GM10248 (cell line): ENCODE measurements at regions of chr15 and their contacts with region 1.

Region 1: GRCh38 chr15:82072926-82073537 is 27.2 kb upstream of the MEX3B start:
- DNase-seq: no peak
- CTCF ChIP-seq: no peak

Region 2: DNA sequence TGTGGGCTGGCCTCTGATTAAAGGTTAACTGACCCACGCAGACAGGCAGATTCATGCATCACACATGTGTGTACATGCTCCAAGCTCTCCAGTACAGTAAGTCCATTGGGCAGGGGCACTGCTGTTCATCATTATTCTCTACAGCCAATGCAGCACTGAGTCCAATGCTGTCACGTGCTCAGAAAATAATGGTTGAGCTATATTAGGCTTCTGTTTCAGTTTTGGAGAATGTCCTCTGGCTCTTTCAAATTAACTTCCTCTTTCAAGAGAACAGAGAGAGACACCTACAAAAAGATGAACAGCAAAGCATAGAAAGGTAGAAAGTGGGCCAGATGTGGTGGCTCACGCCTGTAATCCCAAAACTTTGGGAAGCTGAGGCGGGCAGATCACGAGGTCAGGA is 229.8 kb before region 1 on chr15:
- CTCF ChIA-PET with region 1: no interaction called
- POLR2A ChIA-PET with region 1: no interaction called
- DNase-seq: no peak
- CTCF ChIP-seq: no peak

Region 3: DNA sequence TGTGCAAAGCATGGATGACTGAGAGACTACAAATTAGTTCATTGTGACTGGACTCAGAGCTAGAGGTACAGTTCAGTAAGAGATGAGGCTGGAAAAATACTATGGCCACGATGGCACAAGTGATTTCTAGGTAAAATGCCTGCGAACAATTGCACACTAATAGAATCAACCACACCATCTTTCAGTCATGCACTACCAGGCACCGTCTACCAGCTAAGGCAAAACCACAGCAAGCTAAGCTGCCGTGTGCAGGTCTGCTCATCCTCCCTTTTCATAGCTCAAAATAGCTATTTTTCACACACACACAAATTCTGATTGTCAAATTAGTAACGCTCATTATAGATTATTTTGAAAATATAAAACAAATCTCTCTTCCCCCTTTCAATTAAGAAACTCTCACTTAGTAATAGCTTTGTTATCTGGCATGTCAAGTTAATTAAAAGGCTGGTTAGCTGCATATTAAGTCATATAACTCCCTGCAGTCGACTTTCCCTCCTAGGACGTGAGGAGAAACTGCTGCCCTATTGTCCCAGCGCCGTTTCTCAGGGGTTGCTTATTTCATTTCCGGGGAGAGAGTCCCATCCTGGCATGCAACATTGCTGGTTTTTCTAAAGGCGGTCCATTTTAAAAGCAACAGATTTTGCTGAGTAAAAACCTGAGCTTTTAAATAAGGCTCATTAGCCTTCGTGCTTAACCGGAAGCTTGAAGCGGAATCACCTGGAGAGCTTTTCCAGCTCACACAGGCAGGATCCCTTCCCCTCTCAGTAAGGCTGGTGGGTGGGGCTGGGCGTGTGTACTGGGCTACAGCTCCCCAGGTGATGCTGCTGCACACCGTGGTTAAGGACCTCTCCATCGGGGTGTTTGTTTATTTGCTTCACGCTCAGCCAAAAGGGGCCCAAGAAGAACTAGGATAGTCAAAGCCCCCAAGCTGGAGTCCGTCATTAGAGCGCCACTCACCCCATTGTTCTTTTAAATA is 10.3 kb before region 1 on chr15:
- CTCF ChIA-PET with region 1: interaction called, 11 read pairs
- POLR2A ChIA-PET with region 1: no interaction called
- DNase-seq: no peak
- CTCF ChIP-seq: no peak

Region 4: GRCh38 chr15:82098674-82099073 is 25.6 kb after region 1 on chr15:
- CTCF ChIA-PET with region 1: no interaction called
- POLR2A ChIA-PET with region 1: no interaction called
- DNase-seq: no peak
- CTCF ChIP-seq: no peak